ENCODE measurements at regions of chr11 and their contacts with region 1.

Region 1: DNA sequence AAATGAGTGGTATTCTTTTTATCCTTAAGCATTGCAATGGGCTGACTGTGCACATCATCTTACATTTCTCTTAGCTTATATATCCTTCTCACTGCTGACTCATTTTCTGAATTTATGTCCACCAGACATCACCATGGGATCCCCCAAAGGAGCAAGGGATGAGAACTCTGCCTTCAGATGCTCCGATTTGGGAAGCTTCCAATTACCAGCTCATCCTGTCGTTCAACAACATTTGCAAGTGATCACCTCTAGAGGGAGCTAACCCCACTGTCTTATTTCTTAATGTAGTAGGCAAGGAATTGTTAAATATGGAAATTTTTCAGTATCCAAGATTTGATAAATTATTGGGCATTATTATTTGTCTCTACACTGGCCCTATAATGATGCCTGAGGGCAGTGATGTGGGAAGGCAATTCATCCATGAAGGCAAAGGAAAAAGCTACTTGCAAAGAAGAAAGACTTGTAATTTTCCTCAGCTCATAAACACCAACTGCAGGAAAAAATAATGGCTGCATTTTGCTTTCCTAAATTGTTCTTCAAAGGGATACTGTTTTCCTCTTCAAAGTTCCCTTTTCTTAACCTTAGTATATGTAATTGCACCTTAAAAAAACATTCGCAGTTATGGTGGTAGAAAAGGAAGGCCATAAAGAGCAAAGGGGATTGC is 102.4 kb upstream of the FSHB start:
- DNase-seq: peak; percentile 8
- H3K4me3 ChIP-seq: no peak overlapping the region
- H3K27ac ChIP-seq: no peak overlapping the region
- H3K27me3 ChIP-seq: no peaks in the 10 kb centered on the region
- CTCF ChIP-seq: peak; percentile 66

Region 2: DNA sequence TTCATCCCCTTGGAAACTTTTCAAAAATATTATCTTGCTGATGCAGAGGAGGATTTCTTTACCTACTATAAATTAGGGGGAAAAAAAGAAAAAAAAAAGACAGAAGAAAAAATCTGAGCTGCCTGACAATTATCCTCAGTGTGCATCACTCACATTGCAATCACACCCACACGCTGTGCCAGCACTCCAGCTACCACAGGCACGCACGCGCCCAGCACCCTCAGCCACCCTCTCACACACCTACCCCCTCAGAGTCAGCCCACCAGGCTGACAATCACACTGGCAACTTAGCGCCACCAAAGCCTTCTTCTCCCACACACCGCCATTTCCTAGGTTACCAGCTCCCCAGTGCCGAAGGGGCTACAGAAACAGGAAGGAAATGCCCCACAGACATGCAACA is 347.6 kb before region 1 on chr11:
- CTCF ChIA-PET with region 1: no interaction called
- POLR2A ChIA-PET with region 1: no interaction called
- DNase-seq: no peak
- H3K4me3 ChIP-seq: no peak overlapping the region
- H3K27ac ChIP-seq: no peak overlapping the region
- H3K27me3 ChIP-seq: no peaks in the 10 kb centered on the region
- CTCF ChIP-seq: no peak

Region 3: DNA sequence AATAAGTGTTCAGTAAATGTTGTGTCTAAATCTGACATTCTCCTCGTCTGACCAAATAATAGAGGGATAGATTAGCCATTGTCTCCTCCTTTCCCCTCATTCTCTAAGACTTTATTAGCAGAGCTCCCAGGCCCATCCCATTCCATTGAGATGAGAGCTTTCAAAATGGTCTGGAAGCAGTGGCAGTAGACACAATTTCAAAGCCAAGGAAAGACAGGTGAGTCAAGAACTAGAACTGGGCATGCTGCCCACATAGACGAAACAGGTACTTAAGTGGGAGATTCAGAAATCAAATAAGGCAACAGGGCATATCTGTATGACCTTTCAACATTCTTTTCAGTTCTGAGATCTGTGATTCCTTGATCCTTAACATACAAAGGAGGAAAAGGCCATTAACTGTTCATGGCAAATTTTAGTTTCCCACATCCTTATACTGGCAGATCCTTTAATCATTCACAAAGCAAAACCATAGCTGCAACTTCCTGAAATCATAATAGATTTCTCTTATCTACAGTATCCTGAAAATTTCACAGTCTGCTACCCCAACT is 15.0 kb before region 1 on chr11:
- CTCF ChIA-PET with region 1: interaction called, 27 read pairs
- POLR2A ChIA-PET with region 1: no interaction called
- DNase-seq: no peak
- H3K4me3 ChIP-seq: no peak overlapping the region
- H3K27ac ChIP-seq: no peak overlapping the region
- H3K27me3 ChIP-seq: no peaks in the 10 kb centered on the region
- CTCF ChIP-seq: no peak

Region 4: GRCh38 chr11:30150425-30150824 is 22.0 kb after region 1 on chr11:
- CTCF ChIA-PET with region 1: interaction called, 40 read pairs
- POLR2A ChIA-PET with region 1: no interaction called
- DNase-seq: no peak
- H3K4me3 ChIP-seq: no peak overlapping the region
- H3K27ac ChIP-seq: no peak overlapping the region
- H3K27me3 ChIP-seq: no peaks in the 10 kb centered on the region
- CTCF ChIP-seq: no peak